H1 (cell line): ENCODE measurements at regions of chr1 and their contacts with region 1.

Region 1: GRCh38 chr1:3431266-3431665 is 23.2 kb upstream of the ARHGEF16 start:
- DNase-seq: no peak
- H3K4me3 ChIP-seq: no peak overlapping the region
- H3K27ac ChIP-seq: no peak overlapping the region
- H3K4me1 ChIP-seq: peaks cover 0 to 7% (median 1%) of the 10 kb centered on the region in 4 experiments; a peak in 3 of 7 replicates
- H3K27me3 ChIP-seq: no peaks in the 10 kb centered on the region
- CTCF ChIP-seq: peak in 2 of 3 experiments; percentile 60 to 74; a peak in 3 of 4 replicates
- EP300 ChIP-seq: no peak
- POLR2A ChIP-seq: no peak
- RAD21 ChIP-seq: peak in 1 of 2 experiments; percentile 37; a peak in 3 of 4 replicates

Region 2: GRCh38 chr1:3417082-3417739 is 14.1 kb before region 1 on chr1:
- CTCF ChIA-PET with region 1: interaction called, 50 read pairs
- POLR2A ChIA-PET with region 1: interaction called, 3 read pairs
- DNase-seq: no peak
- H3K4me3 ChIP-seq: no peak overlapping the region
- H3K27ac ChIP-seq: no peak overlapping the region
- H3K4me1 ChIP-seq: no peaks in the 10 kb centered on the region; a peak in 1 of 7 replicates
- H3K27me3 ChIP-seq: no peaks in the 10 kb centered on the region
- CTCF ChIP-seq: peak in 2 of 3 experiments; percentile 41 to 45; a peak in 3 of 4 replicates
- EP300 ChIP-seq: no peak
- POLR2A ChIP-seq: no peak
- RAD21 ChIP-seq: no peak; a peak in 1 of 4 replicates

Region 3: GRCh38 chr1:3598051-3598491 is 166.8 kb after region 1 on chr1:
- CTCF ChIA-PET with region 1: no interaction called
- POLR2A ChIA-PET with region 1: no interaction called
- DNase-seq: no peak
- H3K4me3 ChIP-seq: no peak overlapping the region
- H3K27ac ChIP-seq: no peak overlapping the region
- H3K4me1 ChIP-seq: peaks cover 0 to 28% (median 20%) of the 10 kb centered on the region in 4 experiments; a peak in 6 of 7 replicates
- H3K27me3 ChIP-seq: no peaks in the 10 kb centered on the region
- CTCF ChIP-seq: no peak
- EP300 ChIP-seq: no peak
- POLR2A ChIP-seq: no peak
- RAD21 ChIP-seq: no peak